ENCODE measurements at regions of chr2 and their contacts with region 1.

Region 1: DNA sequence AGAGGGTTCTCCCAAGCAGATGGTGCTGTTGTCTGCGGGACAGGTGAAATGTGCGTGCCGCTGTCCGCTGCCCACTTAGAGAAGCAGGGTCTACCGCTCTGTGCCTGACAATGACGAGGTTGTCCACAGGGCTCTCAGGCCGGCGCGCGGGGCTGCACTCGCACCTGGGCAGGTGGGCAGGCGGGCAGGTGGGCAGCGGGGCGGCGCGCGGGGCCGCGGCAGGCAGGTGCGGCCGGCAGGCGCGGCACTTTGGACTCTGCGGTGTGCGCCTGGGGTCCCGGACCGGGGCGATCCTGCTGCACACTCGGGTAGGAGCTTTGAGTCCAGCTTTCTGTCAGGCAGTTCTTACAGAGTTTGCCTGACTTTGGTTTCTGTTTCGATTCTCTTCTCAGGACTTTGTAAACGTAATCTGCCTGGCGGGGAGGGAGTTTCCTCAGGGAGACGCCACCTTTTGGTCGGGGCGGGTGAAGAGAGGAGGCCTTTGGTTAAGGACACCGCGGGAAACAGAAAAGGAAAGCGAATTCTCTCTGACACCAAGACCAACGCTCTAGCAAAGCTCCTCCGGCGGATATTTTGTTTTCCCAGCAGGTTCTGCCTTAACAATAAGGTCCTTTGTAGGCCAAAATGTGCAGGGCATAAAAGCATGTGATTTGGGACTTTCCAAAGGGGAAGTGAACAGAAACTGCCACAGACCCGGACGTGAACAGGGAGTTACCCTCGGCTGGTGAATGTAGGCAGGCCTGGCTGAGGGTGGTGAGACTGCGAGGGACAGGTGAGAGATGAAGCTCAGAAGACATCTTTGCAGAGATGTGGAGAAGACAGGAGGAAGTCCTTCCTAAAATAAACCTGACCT is at the start of gene IFIH1:
- DNase-seq: peak; percentile 87
- H3K4me3 Mint-ChIP-seq: peak within 1 kb of the TSS; percentile 82
- H3K27ac Mint-ChIP-seq: peak within 1 kb of the TSS; percentile 92
- H3K4me1 Mint-ChIP-seq: peaks cover 53% of the 10 kb centered on the region
- H3K27me3 Mint-ChIP-seq: no peaks in the 10 kb centered on the region

Region 2: DNA sequence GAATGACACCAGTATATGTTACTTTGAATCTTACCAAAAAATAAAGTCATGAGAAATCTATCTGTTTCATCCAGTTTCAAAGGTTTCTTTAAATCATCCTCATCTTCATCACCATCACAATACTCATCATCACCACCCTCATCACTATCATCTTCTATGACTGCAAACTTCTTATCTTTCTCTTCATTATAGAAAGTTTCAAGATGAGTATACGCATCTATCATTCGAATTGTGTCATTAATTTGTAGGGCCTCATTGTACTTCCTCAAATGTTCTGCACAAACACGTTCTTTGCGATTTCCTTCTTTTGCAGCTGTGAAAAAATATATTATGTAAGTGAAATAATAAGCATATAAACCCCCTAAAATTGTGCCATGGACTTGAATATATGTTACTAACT is 41.2 kb before region 1 on chr2:
- CTCF ChIA-PET with region 1: no interaction called
- DNase-seq: no peak
- H3K4me3 Mint-ChIP-seq: no peak overlapping the region
- H3K27ac Mint-ChIP-seq: no peak overlapping the region
- H3K4me1 Mint-ChIP-seq: no peaks in the 10 kb centered on the region
- H3K27me3 Mint-ChIP-seq: no peaks in the 10 kb centered on the region

Region 3: DNA sequence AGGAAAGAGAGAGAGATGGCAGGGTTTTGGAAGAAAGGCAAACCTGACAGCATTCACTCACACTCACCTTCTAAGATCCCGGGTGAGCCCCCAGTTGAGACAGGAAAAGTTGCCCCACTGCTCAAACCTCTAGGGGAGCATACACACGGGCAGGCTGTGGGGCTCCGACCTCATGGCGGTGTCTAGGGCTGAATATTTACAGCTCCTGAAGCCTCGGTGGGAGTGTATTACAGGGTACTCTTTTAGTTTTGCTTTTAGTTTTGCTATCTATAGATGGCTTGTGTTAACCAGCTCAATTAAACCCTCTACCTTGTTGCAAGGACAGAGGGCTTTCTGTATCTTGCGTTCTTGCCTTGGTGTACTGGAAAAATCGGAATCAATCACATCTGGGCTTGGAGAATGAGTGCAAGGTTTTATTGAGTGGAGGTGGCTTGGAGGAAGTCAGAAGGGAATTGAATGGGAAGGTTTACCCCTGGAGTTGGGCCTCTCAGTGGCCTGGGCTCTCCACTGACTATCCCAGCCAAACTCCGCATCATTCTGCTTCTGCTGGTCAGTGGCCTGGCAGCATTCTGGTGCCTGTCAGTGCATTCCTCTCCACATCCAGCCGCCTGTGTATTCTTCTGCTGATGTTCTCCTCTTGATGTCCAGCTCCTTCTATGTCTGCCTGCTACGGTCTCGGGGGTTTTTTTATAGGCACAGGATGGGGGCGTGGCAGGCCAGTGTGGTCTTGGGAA is 10.0 kb after region 1 on chr2:
- CTCF ChIA-PET with region 1: interaction called, 14 read pairs
- DNase-seq: peak; percentile 24
- H3K4me3 Mint-ChIP-seq: no peak overlapping the region
- H3K27ac Mint-ChIP-seq: no peak overlapping the region
- H3K4me1 Mint-ChIP-seq: peaks cover 6% of the 10 kb centered on the region
- H3K27me3 Mint-ChIP-seq: no peaks in the 10 kb centered on the region

Region 4: GRCh38 chr2:162333968-162334367 is 15.4 kb after region 1 on chr2:
- CTCF ChIA-PET with region 1: interaction called, 14 read pairs
- DNase-seq: peak; percentile 38
- H3K4me3 Mint-ChIP-seq: no peak overlapping the region
- H3K27ac Mint-ChIP-seq: no peak overlapping the region
- H3K4me1 Mint-ChIP-seq: no peaks in the 10 kb centered on the region
- H3K27me3 Mint-ChIP-seq: peaks cover 3% of the 10 kb centered on the region